PC-3 (cell line): ENCODE measurements at regions of chr12 and their contacts with region 1.

Region 1: GRCh38 chr12:70365648-70366518 is at the start of gene KCNMB4:
- DNase-seq: peak; percentile 74
- ATAC-seq: peak; percentile 76
- H3K4me3 ChIP-seq: peak within 1 kb of the TSS; percentile 79
- H3K27ac ChIP-seq: no peak within 1 kb of the TSS
- H3K4me1 ChIP-seq: peaks cover 20% of the 10 kb centered on the region
- H3K27me3 ChIP-seq: no peaks in the 10 kb centered on the region
- CTCF ChIP-seq: no peak
- total RNA-seq, gene KCNMB4: 2.6 and 3.0 TPM in 2 replicates

Region 2: DNA sequence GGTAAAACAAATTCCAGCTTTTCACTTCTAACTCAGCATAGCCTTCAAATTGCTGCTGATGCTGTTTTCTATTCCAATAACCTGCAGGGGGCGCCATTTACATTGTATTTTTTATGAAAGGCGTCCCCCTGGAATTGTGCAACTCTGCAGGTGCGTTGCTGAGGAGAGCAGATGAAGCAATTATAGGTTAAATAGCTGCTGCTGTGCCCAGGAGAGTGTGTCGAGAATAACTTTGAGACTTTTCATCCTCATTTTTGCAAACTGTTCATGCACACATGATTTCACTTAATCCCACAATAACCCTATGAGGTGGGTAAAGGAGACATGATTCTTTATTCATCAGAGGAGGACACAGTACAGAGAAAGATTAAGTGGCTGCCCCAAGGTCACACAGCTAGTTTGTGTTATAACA is 465.2 kb before region 1 on chr12:
- CTCF ChIA-PET with region 1: no interaction called
- POLR2A ChIA-PET with region 1: no interaction called
- intact Hi-C with region 1: loop called (anchors 10 kb)
- DNase-seq: peak; percentile 86
- ATAC-seq: peak; percentile 69
- H3K4me3 ChIP-seq: no peak overlapping the region
- H3K27ac ChIP-seq: no peak overlapping the region
- H3K4me1 ChIP-seq: no peaks in the 10 kb centered on the region
- H3K27me3 ChIP-seq: no peaks in the 10 kb centered on the region
- CTCF ChIP-seq: peak; percentile 92

Region 3: DNA sequence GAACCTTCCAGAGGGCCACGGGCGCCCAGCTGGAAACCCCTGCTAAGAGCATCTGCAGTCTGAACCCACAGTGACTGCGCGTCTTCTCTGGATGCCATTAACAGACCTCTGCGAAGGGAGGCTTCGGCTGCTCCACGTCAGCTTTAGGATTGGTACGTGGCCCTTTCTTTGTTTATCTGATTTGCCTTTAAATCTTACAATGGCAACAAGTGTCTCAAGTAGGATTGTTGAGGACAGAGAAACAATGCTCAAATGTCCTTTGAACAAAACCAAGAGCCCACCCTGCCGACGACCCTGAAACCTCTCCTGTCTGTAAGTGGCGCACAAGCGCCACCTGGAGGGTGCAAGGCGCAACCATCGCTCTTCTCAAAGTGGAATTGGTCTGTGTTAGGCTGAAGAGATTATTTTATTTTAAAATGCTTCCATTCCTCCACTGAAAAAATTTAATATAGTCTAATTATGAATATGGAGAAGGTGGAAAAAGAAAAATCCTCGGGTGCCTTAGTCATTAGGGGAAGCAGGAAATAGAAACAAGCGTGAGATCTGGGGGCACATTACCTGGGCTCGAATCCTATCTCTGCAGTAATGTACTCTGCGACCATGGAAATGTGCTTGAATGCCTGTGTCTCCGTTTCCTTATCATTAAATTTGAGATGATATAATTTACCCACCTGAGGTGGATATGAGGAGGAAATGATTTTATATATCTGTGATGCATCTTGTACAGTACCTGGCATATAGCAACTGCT is 354.0 kb after region 1 on chr12:
- CTCF ChIA-PET with region 1: no interaction called
- POLR2A ChIA-PET with region 1: no interaction called
- intact Hi-C with region 1: loop called (anchors 10 kb)
- DNase-seq: peak; percentile 46
- ATAC-seq: peak; percentile 51; the same call in 1 of the 2 replicates
- H3K4me3 ChIP-seq: no peak overlapping the region
- H3K27ac ChIP-seq: no peak overlapping the region
- H3K4me1 ChIP-seq: no peaks in the 10 kb centered on the region
- H3K27me3 ChIP-seq: no peaks in the 10 kb centered on the region
- CTCF ChIP-seq: peak; percentile 98